K562 (cell line): ENCODE measurements at regions of chr22 and their contacts with region 1.

Region 1: GRCh38 chr22:36365020-36365411 is 22.8 kb downstream of the MYH9 start:
- DNase-seq: peak; percentile 45 to 82 (median 56)
- ATAC-seq: peak; percentile 35
- H3K4me3 ChIP-seq: no peak overlapping the region
- H3K27ac ChIP-seq: no peak overlapping the region
- H3K4me1 ChIP-seq: peaks cover 30 to 52% of the 10 kb centered on the region in 2 experiments
- H3K27me3 ChIP-seq: no peaks in the 10 kb centered on the region
- CTCF ChIP-seq: no peak
- EP300 ChIP-seq: no peak; the same call in 1 of the 2 replicates
- POLR2A ChIP-seq: no peak
- RAD21 ChIP-seq: no peak

Region 2: GRCh38 chr22:36331306-36331911 is 33.6 kb before region 1 on chr22:
- CTCF ChIA-PET with region 1: no interaction called
- POLR2A ChIA-PET with region 1: interaction called, 4 read pairs
- in situ Hi-C with region 1: no loop called
- intact Hi-C with region 1: loop called (anchors 1 kb)
- DNase-seq: peak; percentile 49 to 83 (median 63)
- ATAC-seq: peak; percentile 69
- H3K4me3 ChIP-seq: no peak overlapping the region
- H3K27ac ChIP-seq: peak overlapping the region; percentile 91
- H3K4me1 ChIP-seq: peaks cover 72 to 75% of the 10 kb centered on the region in 2 experiments
- H3K27me3 ChIP-seq: no peaks in the 10 kb centered on the region
- CTCF ChIP-seq: no peak
- EP300 ChIP-seq: peak; percentile 66
- POLR2A ChIP-seq: no peak
- RAD21 ChIP-seq: no peak

Region 3: GRCh38 chr22:36423461-36424404 is 58.7 kb after region 1 on chr22:
- CTCF ChIA-PET with region 1: no interaction called
- POLR2A ChIA-PET with region 1: no interaction called
- in situ Hi-C with region 1: no loop called
- intact Hi-C with region 1: loop called (anchors 5 kb)
- DNase-seq: peak; percentile 41 to 75 (median 52)
- ATAC-seq: peak; percentile 73
- H3K4me3 ChIP-seq: no peak overlapping the region
- H3K27ac ChIP-seq: peak overlapping the region; percentile 49; the same call in 2 of the 3 replicates
- H3K4me1 ChIP-seq: peaks cover 38 to 40% of the 10 kb centered on the region in 2 experiments
- H3K27me3 ChIP-seq: no peaks in the 10 kb centered on the region
- CTCF ChIP-seq: peak in 1 of 3 experiments; percentile 11; a peak in 1 of 6 replicates
- EP300 ChIP-seq: peak; percentile 74
- POLR2A ChIP-seq: no peak
- RAD21 ChIP-seq: peak in 1 of 2 experiments; percentile 48; a peak in 3 of 4 replicates

Region 4: GRCh38 chr22:36497910-36498665 is 133.1 kb after region 1 on chr22:
- CTCF ChIA-PET with region 1: no interaction called
- POLR2A ChIA-PET with region 1: no interaction called
- in situ Hi-C with region 1: no loop called
- intact Hi-C with region 1: no loop called
- DNase-seq: no peak
- ATAC-seq: no peak; the same call in 2 of the 3 replicates
- H3K4me3 ChIP-seq: no peak overlapping the region
- H3K27ac ChIP-seq: no peak overlapping the region; the same call in 2 of the 3 replicates
- H3K4me1 ChIP-seq: no peaks in the 10 kb centered on the region; a peak in 1 of 5 replicates
- H3K27me3 ChIP-seq: no peaks in the 10 kb centered on the region
- CTCF ChIP-seq: no peak
- EP300 ChIP-seq: no peak
- POLR2A ChIP-seq: no peak
- RAD21 ChIP-seq: no peak